Heart right ventricle (tissue), 16 donors: ENCODE measurements at regions of chr11 and their contacts with region 1.

Region 1: DNA sequence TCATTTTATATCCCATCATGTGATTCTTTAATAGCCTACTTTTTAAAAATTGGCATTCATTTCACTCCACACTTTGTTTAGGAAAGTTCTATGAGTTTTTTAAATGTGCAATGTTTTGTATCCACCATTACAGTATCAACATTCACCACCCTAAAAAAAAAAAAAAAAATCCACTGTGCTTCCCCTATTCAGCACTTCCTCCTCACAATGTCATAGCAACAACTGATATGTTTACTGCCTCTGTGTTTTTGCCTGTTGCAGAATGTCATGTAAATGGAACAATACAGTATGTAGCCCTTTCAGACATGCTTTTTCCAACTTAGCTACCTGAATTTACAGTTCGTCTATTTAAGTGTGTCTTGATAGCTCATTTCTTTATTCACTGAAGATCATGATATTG is 754.2 kb downstream of the FAM181B start:
- DNase-seq: no peak
- ATAC-seq: no peak
- H3K4me3 ChIP-seq: no peak overlapping the region
- H3K27ac ChIP-seq: no peak overlapping the region
- H3K4me1 ChIP-seq: no peaks in the 10 kb centered on the region
- H3K27me3 ChIP-seq: no peaks in the 10 kb centered on the region
- CTCF ChIP-seq: no peak

Region 2: DNA sequence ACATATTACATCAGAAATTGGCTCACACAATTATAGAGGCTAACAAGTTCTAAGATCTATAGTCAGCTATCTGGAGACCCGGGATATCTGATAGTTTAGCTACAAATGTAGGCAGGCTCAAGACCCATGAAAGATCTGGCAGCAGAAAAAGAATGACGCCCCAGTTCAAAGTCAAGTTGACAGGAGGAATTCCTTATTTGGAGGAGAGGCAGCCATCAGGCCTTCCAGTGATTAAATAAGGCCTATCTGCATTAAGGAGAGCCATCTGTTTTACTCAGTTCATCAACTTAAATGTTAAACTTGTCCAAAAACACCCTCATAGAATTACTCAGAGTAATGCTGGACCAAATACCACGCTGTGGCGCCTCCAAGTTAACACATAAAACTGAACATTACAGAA is 648.4 kb before region 1 on chr11:
- intact Hi-C with region 1: no loop called
- DNase-seq: no peak
- ATAC-seq: no peak
- H3K4me3 ChIP-seq: no peak overlapping the region
- H3K27ac ChIP-seq: no peak overlapping the region
- H3K4me1 ChIP-seq: no peaks in the 10 kb centered on the region
- H3K27me3 ChIP-seq: no peaks in the 10 kb centered on the region
- CTCF ChIP-seq: no peak

Region 3: DNA sequence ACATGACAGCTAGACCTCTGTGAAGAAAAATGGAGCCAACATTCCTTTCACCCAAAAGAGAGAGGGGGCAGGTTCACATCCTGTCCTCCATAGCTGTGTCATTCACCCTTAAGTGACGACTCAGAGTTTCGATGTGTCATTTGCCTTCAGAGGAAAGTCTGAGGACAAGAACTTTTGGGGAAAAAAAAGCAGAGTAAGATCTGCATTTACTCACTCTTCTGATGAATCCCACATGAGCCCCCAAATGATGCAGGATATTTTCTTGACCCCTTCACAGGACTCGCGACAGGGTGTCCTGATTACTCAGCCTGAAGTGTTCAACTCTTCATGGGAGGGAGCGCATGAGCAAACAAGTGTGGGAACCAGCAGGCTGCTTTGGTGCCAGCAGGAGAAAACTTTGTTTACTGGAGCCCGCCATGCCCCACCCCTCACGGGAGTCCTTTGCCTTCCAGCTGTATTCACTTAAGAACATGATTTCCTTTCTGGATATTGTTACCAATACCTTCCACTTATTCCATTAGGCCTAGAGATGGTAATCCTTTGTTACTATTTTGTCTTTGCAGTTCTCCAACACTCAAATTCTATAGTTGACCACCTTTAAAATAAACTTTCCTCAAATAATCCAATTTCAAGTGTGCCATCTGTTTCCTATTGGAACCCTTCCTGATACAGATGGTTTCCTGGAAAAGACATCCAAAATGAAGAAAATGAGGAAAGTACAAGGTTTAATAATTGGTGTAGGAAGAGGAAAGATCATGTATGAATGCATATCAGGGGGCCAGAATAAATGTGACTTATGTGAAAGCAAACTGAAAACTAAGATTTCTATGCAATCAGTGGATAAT is 24.4 kb after region 1 on chr11:
- intact Hi-C with region 1: loop called in 1 of 10 experiments (anchors 1 kb)
- DNase-seq: no peak
- ATAC-seq: no peak
- H3K4me3 ChIP-seq: no peak overlapping the region
- H3K27ac ChIP-seq: no peak overlapping the region
- H3K4me1 ChIP-seq: no peaks in the 10 kb centered on the region
- H3K27me3 ChIP-seq: no peaks in the 10 kb centered on the region
- CTCF ChIP-seq: no peak